ENCODE measurements at regions of chr20 and their contacts with region 1.

Region 1: GRCh38 chr20:14470231-14470899 is 133.0 kb upstream of the FLRT3 start:
- DNase-seq: peak; percentile 54
- H3K4me3 ChIP-seq: no peak overlapping the region
- H3K27ac ChIP-seq: no peak overlapping the region
- H3K4me1 ChIP-seq: peaks cover 0 to 7% (median 2%) of the 10 kb centered on the region in 4 donors
- H3K27me3 ChIP-seq: no peaks in the 10 kb centered on the region
- CTCF ChIP-seq: no peak
- EP300 ChIP-seq: no peak
- POLR2A ChIP-seq: no peak

Region 2: DNA sequence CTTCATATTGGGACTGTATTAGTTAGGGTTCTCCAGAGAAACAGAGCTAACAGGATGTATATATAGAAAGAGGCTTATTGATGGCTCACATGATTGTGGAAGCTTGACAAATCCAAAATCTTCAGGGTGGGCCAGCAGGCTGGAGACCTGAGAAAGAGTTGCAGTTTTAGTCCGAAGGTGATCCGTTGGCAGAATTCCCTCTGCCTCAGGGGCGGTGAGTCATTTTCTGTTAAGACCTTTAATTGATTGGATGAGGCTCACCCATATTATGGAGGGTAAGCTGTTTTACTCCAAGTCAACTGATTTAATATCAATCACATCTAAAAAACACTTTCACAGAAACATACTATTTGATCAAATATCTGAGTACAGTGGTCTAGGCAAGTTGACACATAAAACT is 246.6 kb before region 1 on chr20:
- in situ Hi-C with region 1: no loop called
- intact Hi-C with region 1: no loop called
- DNase-seq: no peak
- H3K4me3 ChIP-seq: no peak overlapping the region
- H3K27ac ChIP-seq: no peak overlapping the region
- H3K4me1 ChIP-seq: peaks cover 0 to 18% (median 11%) of the 10 kb centered on the region in 4 donors
- H3K27me3 ChIP-seq: no peaks in the 10 kb centered on the region
- CTCF ChIP-seq: no peak
- EP300 ChIP-seq: no peak
- POLR2A ChIP-seq: no peak

Region 3: DNA sequence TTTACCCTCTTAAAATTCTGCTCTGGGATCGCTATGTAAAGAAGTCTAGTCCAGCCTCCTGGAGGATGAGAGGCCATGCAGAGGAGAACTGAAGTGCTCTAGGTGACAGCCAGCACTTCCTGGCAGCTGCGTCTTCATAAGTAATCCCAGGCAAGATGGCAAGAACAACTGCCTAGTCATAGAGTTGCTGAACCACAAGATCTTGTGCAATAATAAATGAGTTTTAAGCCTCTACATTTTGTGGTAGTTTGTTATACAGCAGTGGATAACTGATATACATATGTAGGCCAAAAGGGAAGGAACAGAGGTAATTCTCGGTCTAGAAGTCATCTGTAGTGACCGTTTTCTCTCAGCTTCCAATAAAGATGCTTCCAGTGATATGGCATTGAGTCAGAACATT is 29.2 kb before region 1 on chr20:
- in situ Hi-C with region 1: no loop called
- intact Hi-C with region 1: loop called (anchors 1 kb)
- DNase-seq: no peak
- H3K4me3 ChIP-seq: no peak overlapping the region
- H3K27ac ChIP-seq: no peak overlapping the region
- H3K4me1 ChIP-seq: no peaks in the 10 kb centered on the region
- H3K27me3 ChIP-seq: no peaks in the 10 kb centered on the region
- CTCF ChIP-seq: no peak
- EP300 ChIP-seq: no peak
- POLR2A ChIP-seq: no peak